T-cell (primary cell): ENCODE measurements at regions of chr7 and their contacts with region 1.

Region 1: DNA sequence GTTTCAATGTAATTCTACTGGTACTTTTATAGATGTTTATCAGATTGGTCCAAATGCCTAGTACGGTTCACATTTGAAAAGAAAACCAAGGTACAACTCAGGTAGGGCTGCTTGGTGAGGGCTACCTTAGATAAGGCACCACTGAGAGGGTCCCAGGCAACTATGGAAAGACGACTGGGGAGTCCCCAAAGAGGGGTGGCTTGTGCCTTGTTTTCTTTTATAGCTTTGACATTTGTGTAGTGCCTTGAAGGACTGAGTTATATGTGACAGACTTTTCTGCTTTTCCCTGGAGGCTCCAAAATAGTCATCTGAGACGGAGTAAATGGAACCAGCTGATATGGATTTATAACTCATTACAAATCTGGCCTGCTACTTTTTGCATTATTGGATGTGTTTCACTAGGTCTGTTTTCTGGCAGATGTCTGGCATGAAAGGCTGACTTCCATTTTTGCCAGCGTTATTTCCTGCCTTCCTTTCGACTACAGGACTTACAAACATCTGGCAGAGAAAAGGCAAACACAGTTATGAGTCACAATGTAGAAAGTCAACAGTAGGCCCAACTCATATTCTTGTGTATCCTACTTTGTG is 88.2 kb upstream of the IMMP2L start:
- DNase-seq: no peak
- ATAC-seq: no peak
- H3K4me3 ChIP-seq: no peak overlapping the region
- H3K4me3 Mint-ChIP-seq: no peak overlapping the region
- H3K27ac ChIP-seq: no peak overlapping the region
- H3K27ac Mint-ChIP-seq: no peak overlapping the region
- H3K4me1 ChIP-seq: no peaks in the 10 kb centered on the region
- H3K4me1 Mint-ChIP-seq: no peaks in the 10 kb centered on the region
- H3K27me3 ChIP-seq: no peaks in the 10 kb centered on the region
- H3K27me3 Mint-ChIP-seq: peaks cover 7 to 16% of the 10 kb centered on the region in 2 donors

Region 2: DNA sequence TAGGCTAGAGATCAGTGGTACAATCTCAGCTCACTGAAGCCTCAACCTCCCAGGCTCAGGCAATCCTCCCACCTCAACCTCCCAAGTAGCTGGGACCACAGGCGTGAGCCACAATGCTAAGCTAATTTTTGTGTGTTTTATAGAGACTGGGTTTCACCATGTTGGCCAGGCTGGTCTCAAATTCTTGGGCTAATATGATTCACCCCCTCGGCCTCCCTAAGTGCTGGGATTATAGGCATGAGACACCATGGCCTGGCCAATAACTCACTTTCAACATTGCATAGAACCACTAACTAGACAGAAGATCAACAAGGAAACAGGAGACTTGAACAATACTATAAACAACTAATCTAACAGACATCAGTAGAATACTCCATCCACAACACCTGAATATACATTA is 367.9 kb before region 1 on chr7:
- CTCF ChIA-PET with region 1: interaction called in 1 of 2 experiments, 10 read pairs
- POLR2A ChIA-PET with region 1: no interaction called
- DNase-seq: no peak
- ATAC-seq: no peak
- H3K4me3 ChIP-seq: no peak overlapping the region
- H3K4me3 Mint-ChIP-seq: no peak overlapping the region
- H3K27ac ChIP-seq: no peak overlapping the region
- H3K27ac Mint-ChIP-seq: no peak overlapping the region
- H3K4me1 ChIP-seq: no peaks in the 10 kb centered on the region
- H3K4me1 Mint-ChIP-seq: peaks cover 0 to 10% (median 1%) of the 10 kb centered on the region in 3 donors
- H3K27me3 ChIP-seq: no peaks in the 10 kb centered on the region
- H3K27me3 Mint-ChIP-seq: no peaks in the 10 kb centered on the region